ENCODE measurements at regions of chr11 and their contacts with region 1.

Region 1: DNA sequence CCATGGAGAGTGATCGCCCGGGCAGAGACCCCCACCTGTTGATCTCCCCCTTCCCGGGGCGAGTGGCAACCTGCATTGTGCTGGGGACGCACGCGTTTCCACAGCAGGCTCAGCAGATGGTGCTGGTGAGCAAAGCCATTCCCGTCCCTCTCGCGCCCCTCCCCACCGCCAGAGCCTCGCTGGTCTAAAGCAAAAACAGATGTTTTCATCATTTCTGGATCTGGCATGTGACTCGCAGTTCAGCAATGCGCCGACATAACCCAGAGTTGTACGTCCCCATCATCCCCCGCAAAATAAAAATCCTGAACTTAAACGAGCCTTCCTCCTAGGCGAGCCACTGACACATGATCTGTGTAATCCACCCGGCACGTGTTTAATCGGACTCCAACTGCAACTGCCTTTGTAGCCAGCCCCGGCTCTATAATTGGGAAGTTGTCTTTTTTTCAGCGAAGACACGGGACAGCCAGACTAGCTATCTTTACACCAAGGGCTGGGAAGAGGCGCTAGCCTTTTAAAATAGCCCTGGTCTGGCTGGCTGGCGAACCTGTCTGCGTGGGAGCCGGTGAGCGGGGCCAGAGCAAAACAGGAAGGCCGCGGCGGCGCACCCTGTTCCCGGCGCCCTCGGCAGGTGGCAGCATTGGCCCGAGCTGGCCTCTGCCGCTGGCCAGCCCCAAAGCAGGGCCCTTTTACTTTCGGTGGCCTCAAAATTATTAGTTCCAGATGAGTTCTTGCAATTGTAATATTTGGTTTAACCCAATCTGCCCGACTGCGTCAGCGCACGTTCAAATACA is 203.0 kb upstream of the SORL1-AS1 start:
- ATAC-seq: peak; percentile 83 to 93 (median 90)
- H3K4me3 ChIP-seq: peak overlapping the region; percentile 26 to 40 (median 30)
- H3K27ac ChIP-seq: peak overlapping the region; percentile 80 to 87
- H3K4me1 ChIP-seq: peaks cover 31 to 42% of the 10 kb centered on the region in 2 donors

Region 2: GRCh38 chr11:121538054-121538453 is 117.7 kb before region 1 on chr11:
- in situ Hi-C with region 1: no loop called
- ATAC-seq: no peak
- H3K4me3 ChIP-seq: no peak overlapping the region
- H3K27ac ChIP-seq: no peak overlapping the region
- H3K4me1 ChIP-seq: peaks cover 0 to 16% of the 10 kb centered on the region in 2 donors

Region 3: DNA sequence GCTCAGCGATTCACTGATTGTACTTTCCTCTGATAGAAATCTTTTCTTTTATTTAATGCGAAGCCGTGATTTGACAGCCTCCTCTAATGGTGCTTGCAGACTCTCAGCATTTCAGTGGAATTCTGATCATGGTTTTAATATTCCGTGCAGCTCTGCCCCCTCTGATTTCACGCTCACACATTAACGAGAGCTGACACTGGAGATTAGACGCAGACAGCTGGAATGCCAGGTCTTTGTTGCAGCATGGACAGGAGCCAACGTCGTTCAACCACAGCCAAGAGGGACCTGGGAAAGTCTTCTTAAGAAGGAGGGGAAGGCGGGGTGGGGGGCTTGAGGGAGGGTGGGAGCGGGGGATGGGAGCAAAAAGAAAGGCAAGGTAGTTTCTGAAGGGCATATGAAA is 273.8 kb after region 1 on chr11:
- in situ Hi-C with region 1: loop called in 1 of 9 experiments (anchors 25 kb)
- ATAC-seq: peak in 7 of 8 experiments; percentile 22 to 83 (median 82)
- H3K4me3 ChIP-seq: peak overlapping the region; percentile 21 to 36 (median 28)
- H3K27ac ChIP-seq: peak overlapping the region; percentile 67 to 83
- H3K4me1 ChIP-seq: peaks cover 11 to 26% of the 10 kb centered on the region in 2 donors

Region 4: DNA sequence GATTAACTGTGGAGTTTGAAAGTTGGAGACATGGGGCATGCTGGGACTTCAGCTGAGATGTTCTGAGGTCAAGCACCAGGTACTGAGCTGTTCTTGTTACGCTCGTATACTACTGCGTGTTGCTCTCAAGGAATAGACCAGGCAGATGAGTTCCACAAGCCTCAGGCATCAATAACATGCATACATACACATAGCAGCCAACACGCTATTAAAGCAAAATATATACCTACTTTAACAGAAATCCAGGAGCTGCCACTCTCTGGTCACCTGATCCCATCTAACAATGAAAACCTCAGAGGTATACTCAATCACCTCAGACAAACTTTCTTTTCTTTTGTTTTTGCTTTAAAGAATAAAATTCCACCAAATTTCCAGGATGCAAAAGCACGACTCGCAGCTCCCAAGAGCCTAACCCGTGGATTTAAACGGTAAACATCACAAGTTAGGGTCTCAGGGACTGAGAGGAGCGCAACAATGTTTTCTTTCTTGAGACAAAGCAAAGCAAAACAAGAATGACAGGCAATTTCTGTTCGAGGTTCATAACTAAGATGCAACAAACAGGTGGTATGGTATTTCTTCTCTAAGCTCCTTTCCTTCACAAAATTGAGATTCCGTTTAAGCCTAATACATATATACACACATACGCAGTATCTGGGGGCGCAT is 443.8 kb after region 1 on chr11:
- in situ Hi-C with region 1: loop called in 4 of 9 experiments (anchors 10 to 25 kb)
- ATAC-seq: peak in 3 of 8 experiments; percentile 3 to 41 (median 7)
- H3K4me3 ChIP-seq: peak overlapping the region; percentile 41 to 71 (median 53)
- H3K27ac ChIP-seq: peak overlapping the region; percentile 68 to 86
- H3K4me1 ChIP-seq: peaks cover 36 to 37% of the 10 kb centered on the region in 2 donors

Region 5: GRCh38 chr11:122197055-122197987 is 541.6 kb after region 1 on chr11:
- in situ Hi-C with region 1: loop called in 5 of 9 experiments (anchors 25 kb)
- ATAC-seq: peak; percentile 43 to 95 (median 68)
- H3K4me3 ChIP-seq: no peak overlapping the region
- H3K27ac ChIP-seq: no peak overlapping the region
- H3K4me1 ChIP-seq: peaks cover 5 to 19% of the 10 kb centered on the region in 2 donors

Region 6: GRCh38 chr11:122505304-122506006 is 849.7 kb after region 1 on chr11:
- in situ Hi-C with region 1: loop called in 8 of 9 experiments (anchors 10 to 25 kb)
- ATAC-seq: peak; percentile 100
- H3K4me3 ChIP-seq: no peak overlapping the region
- H3K27ac ChIP-seq: no peak overlapping the region
- H3K4me1 ChIP-seq: peaks cover 5 to 15% of the 10 kb centered on the region in 2 donors

Measured in motor neuron (in vitro differentiated cells).